Common myeloid progenitor, CD34-positive (primary cell): ENCODE measurements at regions of chr3 and their contacts with region 1.

Region 1: DNA sequence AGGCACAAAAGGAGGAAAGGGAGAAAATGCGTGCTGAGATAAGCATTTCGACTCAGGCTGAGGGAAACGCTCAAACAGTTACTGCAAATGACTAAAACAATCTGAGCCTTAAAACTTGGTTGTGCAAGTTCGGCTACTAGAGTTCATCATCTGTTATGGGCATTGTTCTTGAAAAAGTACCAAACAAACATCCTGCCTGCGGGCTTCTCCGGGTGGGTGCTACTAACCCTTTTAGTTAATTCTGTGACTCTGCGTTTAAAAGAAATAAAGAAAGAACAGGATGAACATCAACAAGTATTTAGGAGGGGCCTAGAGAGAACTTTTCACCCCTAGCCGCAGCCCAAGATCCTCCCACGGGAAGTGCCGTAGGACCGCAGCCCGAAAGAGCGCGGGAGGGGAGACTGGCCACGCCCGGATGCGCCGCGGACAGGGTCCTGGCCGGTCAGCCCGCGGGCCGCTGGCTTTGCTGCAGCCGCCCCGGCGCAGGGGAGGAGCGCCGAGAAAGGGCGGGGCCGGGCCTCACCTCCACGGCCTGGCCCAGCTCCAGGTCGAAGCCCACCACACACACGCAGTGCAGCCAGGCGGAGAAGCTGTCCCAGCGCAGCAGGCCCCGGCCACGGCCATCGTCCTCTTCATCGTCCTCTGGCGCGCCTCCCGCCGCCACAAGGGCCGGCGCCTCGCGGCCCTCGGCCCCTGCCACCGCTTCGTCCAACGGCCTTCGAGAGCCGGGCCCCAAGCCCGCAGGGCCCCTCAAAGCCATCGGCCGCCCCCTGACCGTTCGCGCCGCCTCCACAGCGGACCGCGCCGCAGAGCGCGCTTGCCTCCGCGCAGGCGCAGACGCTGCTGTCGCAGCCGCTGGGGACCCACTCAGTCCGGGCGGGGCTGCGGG is at the start of gene DENND6A:
- DNase-seq: peak; percentile 95 to 97 (median 96)
- H3K4me3 ChIP-seq: peak within 1 kb of the TSS; percentile 71 to 90 (median 84)
- H3K27ac ChIP-seq: peak within 1 kb of the TSS; percentile 61 to 86
- H3K4me1 ChIP-seq: peaks cover 8 to 30% (median 20%) of the 10 kb centered on the region in 4 experiments
- H3K27me3 ChIP-seq: no peaks in the 10 kb centered on the region

Region 2: GRCh38 chr3:57675530-57675929 is 17.0 kb before region 1 on chr3:
- CTCF ChIA-PET with region 1: interaction called, 25 read pairs
- POLR2A ChIA-PET with region 1: interaction called, 11 read pairs
- DNase-seq: no peak
- H3K4me3 ChIP-seq: no peak overlapping the region
- H3K27ac ChIP-seq: no peak overlapping the region
- H3K4me1 ChIP-seq: peaks cover 0 to 25% (median 9%) of the 10 kb centered on the region in 4 experiments
- H3K27me3 ChIP-seq: no peaks in the 10 kb centered on the region

Region 3: DNA sequence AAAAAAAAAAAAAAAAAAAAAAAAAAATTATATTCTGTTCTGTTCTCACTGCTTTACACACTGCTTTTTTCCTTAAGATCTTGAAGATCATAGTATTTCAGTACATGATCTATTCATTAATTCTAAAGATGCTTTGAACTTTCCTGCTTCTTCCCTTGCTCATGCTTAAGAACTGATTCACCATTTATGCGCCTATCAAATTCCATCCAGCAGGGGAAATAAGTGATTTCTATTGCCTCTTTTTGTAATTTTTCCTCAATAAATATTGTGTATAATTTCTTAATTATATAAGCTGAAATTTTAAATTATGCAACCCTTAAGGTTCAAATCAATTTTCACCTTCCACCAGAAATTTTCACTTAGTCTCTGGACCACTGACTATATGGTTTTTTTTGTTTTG is 10.2 kb before region 1 on chr3:
- CTCF ChIA-PET with region 1: interaction called, 25 read pairs
- POLR2A ChIA-PET with region 1: interaction called, 4 read pairs
- DNase-seq: no peak
- H3K4me3 ChIP-seq: no peak overlapping the region
- H3K27ac ChIP-seq: no peak overlapping the region
- H3K4me1 ChIP-seq: peaks cover 0 to 9% (median under 1%) of the 10 kb centered on the region in 4 experiments
- H3K27me3 ChIP-seq: no peaks in the 10 kb centered on the region